CD4-positive, alpha-beta T cell (primary cell): ENCODE measurements at regions of chr4 and their contacts with region 1.

Region 1: DNA sequence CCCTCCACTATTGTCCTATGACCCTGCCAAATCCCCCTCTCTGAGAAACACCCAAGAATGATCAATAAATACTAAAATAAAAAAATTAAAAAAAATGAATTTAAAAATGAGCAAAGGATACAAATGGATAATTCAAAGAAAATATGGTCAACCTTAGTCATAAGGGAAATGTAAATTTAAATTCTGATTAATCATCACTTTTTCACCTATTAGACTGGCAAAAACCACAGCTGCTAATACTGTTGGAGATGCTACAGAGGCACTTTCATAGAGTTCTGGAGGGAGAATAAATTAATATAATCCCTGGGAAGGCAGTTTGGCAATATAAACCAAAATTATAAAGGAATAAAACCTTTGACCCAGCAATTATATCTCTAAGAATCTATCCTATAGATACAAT is 50.3 kb downstream of the LRBA start:
- DNase-seq: no peak
- ATAC-seq: no peak
- H3K4me3 ChIP-seq: no peak overlapping the region
- H3K4me3 Mint-ChIP-seq: no peak overlapping the region
- H3K27ac ChIP-seq: no peak overlapping the region
- H3K27ac Mint-ChIP-seq: no peak overlapping the region
- H3K4me1 ChIP-seq: no peaks in the 10 kb centered on the region
- H3K4me1 Mint-ChIP-seq: peaks cover 33% of the 10 kb centered on the region
- H3K27me3 ChIP-seq: no peaks in the 10 kb centered on the region
- H3K27me3 Mint-ChIP-seq: no peaks in the 10 kb centered on the region
- CTCF ChIP-seq: no peak

Region 2: GRCh38 chr4:149296503-149296902 is 1668.3 kb before region 1 on chr4:
- CTCF ChIA-PET with region 1: no interaction called
- POLR2A ChIA-PET with region 1: no interaction called
- intact Hi-C with region 1: no loop called
- DNase-seq: no peak
- ATAC-seq: no peak
- H3K4me3 ChIP-seq: no peak overlapping the region
- H3K4me3 Mint-ChIP-seq: no peak overlapping the region
- H3K27ac ChIP-seq: no peak overlapping the region
- H3K27ac Mint-ChIP-seq: no peak overlapping the region
- H3K4me1 ChIP-seq: no peaks in the 10 kb centered on the region
- H3K4me1 Mint-ChIP-seq: no peaks in the 10 kb centered on the region
- H3K27me3 ChIP-seq: no peaks in the 10 kb centered on the region
- H3K27me3 Mint-ChIP-seq: no peaks in the 10 kb centered on the region
- CTCF ChIP-seq: no peak

Region 3: DNA sequence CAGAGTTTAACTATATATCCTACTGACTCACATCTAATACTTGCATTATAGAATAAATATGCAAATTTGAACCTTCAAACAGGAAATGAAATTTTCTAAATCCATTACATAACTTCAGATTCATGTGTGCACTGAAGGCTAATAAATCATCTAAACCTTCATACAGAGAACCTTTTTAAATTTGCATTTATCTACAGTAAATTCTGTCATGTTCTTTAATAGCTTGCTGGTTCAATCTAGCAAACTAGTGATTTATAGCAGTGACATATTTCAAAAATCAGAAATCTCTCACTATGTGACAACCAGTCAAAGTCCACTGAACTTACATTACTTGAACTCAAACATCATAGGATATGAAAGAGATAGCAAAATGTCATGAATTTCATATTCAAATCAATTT is 14.8 kb before region 1 on chr4:
- CTCF ChIA-PET with region 1: no interaction called
- POLR2A ChIA-PET with region 1: interaction called, 3 read pairs
- intact Hi-C with region 1: loop called in 1 of 2 experiments (anchors 2 kb)
- DNase-seq: no peak
- ATAC-seq: no peak
- H3K4me3 ChIP-seq: no peak overlapping the region
- H3K4me3 Mint-ChIP-seq: no peak overlapping the region
- H3K27ac ChIP-seq: no peak overlapping the region
- H3K27ac Mint-ChIP-seq: no peak overlapping the region
- H3K4me1 ChIP-seq: peaks cover 5% of the 10 kb centered on the region
- H3K4me1 Mint-ChIP-seq: peaks cover 59% of the 10 kb centered on the region
- H3K27me3 ChIP-seq: no peaks in the 10 kb centered on the region
- H3K27me3 Mint-ChIP-seq: no peaks in the 10 kb centered on the region
- CTCF ChIP-seq: no peak